ENCODE measurements at regions of chr20 and their contacts with region 1.

Region 1: DNA sequence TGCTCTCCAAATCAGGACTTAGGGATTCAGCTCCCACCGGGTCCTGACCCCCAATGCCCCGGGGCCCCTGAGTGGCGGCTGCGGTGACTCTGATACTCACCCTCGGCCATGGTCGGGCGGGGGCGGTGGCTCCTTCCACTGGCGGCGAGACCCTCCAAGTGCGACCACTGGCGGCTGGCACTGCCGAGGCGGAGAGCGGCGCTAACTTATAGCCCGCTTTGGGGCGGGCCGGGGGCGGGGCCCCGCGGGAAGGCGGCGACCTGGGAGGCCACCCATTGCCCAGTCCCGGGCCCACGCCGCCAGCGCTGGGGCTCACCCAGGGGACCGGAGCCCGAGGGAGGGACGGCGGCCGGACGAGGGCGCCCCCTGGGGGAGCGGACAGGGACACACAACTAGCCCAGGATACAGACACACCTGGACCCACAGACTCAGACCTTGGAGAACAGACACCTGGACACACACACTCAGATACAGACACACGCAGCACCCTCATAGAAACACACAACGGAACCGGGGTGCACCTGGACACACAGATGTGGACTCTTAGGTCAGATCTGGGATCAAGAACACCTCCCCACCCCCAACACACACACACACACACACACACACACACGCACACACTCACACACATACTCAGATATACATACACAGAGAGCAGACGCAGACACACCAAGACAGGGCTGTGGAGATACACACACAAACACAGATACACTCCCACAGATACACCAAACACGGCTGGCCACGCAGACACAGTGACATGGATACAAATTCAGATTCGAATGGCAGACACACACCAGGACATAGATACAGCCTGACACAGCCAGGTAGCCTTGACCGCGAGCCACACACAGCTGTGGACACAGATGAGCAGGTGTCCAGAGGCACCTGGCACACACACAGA is at the start of gene TGM2:
- DNase-seq: peak; percentile 75
- H3K4me3 Mint-ChIP-seq: peak within 1 kb of the TSS; percentile 11
- H3K27ac Mint-ChIP-seq: peak within 1 kb of the TSS; percentile 61
- H3K4me1 Mint-ChIP-seq: peaks cover 41% of the 10 kb centered on the region
- H3K27me3 Mint-ChIP-seq: no peaks in the 10 kb centered on the region
- CTCF ChIP-seq: peak; percentile 75
- total RNA-seq, gene TGM2: 0.76 and 1.5 TPM in 2 replicates

Region 2: GRCh38 chr20:38143646-38144554 is 21.4 kb before region 1 on chr20:
- CTCF ChIA-PET with region 1: interaction called, 8 read pairs
- POLR2A ChIA-PET with region 1: interaction called, 10 read pairs
- intact Hi-C with region 1: loop called (anchors 2 kb)
- DNase-seq: peak; percentile 97
- H3K4me3 Mint-ChIP-seq: peak overlapping the region; percentile 40
- H3K27ac Mint-ChIP-seq: peak overlapping the region; percentile 95
- H3K4me1 Mint-ChIP-seq: peaks cover 38% of the 10 kb centered on the region
- H3K27me3 Mint-ChIP-seq: no peaks in the 10 kb centered on the region
- CTCF ChIP-seq: no peak

Region 3: DNA sequence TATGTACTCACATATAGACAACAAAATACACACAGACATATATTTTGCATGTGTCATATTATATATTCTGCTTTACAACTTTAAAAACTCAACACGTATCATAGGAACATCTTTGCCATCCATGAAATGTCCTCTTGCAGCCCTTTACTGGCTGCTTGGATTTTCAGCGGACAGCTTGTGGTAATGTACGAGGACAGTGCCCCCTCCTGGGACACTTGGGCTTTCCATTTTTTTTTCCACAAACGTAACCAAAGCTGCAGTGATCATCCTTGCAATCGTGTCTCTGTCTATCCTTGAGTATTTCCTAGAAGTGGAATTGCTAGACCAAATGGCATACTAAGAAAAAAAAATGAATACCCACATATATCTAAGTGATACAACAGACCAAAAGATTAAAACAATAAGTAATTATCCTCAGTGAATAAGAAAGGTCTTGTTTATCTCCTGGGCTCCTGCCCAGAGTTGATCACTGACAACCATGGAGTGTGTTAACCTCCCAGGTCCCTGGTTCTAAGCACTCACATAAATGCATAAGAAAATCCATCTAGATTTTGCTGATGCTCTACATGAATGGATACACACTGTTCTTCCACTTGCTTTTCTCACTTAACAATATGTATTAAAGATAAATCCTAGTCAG is 156.7 kb after region 1 on chr20:
- CTCF ChIA-PET with region 1: interaction called, 4 read pairs
- POLR2A ChIA-PET with region 1: no interaction called
- intact Hi-C with region 1: loop called (anchors 5 kb)
- DNase-seq: peak; percentile 63
- H3K4me3 Mint-ChIP-seq: no peak overlapping the region
- H3K27ac Mint-ChIP-seq: no peak overlapping the region
- H3K4me1 Mint-ChIP-seq: no peaks in the 10 kb centered on the region
- H3K27me3 Mint-ChIP-seq: peaks cover 40% of the 10 kb centered on the region
- CTCF ChIP-seq: peak; percentile 60